CD8-positive, alpha-beta T cell (primary cell): ENCODE measurements at regions of chr6 and their contacts with region 1.

Region 1: DNA sequence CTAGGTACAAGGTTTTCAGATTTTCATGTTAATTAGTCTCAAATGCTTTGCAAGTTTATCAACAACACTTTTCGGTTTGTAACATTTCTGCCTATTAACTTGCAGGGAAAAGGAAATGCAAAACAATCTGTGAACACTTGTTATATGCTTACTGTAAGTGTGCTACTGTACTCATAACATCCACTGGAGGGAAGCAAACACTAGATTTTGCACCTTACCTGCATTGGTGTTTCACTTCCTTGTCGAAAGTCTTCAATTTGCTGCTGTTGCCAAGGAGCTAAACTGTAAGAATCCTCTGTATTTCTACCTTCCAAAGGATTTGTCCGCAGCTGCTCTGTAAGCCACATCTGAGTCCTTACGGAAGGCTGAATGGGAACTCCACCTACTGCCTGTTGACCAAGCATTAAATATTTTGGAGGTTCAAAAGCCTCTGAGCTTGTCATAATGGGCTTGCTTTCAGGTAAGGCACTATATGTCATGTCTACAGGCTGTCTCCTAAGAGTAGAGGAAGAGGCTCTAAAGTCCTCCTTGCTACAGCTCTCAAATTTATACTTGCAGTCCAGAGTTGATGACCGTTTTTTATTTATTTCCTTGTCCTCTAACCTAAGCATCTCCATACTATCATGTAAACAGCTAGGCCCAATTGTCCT is 17.3 kb downstream of the PLN start:
- DNase-seq: peak in 3 of 9 experiments; percentile 13 to 78 (median 66)
- ATAC-seq: peak; percentile 97
- H3K4me3 ChIP-seq: no peak overlapping the region
- H3K4me3 Mint-ChIP-seq: no peak overlapping the region
- H3K27ac ChIP-seq: no peak overlapping the region
- H3K27ac Mint-ChIP-seq: peak overlapping the region; percentile 85
- H3K4me1 ChIP-seq: peaks cover 3% of the 10 kb centered on the region
- H3K4me1 Mint-ChIP-seq: peaks cover 48% of the 10 kb centered on the region
- H3K27me3 ChIP-seq: no peaks in the 10 kb centered on the region
- H3K27me3 Mint-ChIP-seq: no peaks in the 10 kb centered on the region
- CTCF ChIP-seq: peak; percentile 72

Region 2: DNA sequence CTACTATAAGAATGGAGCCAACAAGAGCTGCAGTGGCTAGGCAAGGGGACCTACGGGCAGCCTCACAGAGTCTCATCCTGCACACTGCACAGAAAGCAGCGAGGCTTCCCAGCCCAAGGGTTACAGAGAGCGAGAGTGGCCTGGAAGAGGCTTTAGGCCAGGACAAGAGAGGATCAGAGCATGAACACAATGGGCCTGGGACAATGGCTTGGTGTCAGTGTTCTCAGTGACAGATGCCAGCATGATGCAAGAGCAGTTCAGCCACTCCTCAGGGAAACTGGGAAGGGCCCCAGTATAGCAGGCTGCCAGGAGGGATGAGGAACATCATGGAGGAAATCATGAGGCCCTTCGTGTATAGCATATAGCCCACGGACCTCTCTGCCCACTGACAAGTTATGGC is 782.2 kb before region 1 on chr6:
- CTCF ChIA-PET with region 1: no interaction called
- POLR2A ChIA-PET with region 1: no interaction called
- intact Hi-C with region 1: no loop called
- DNase-seq: no peak
- ATAC-seq: no peak
- H3K4me3 ChIP-seq: no peak overlapping the region
- H3K4me3 Mint-ChIP-seq: no peak overlapping the region
- H3K27ac ChIP-seq: no peak overlapping the region
- H3K27ac Mint-ChIP-seq: no peak overlapping the region
- H3K4me1 ChIP-seq: no peaks in the 10 kb centered on the region
- H3K4me1 Mint-ChIP-seq: no peaks in the 10 kb centered on the region
- H3K27me3 ChIP-seq: no peaks in the 10 kb centered on the region
- H3K27me3 Mint-ChIP-seq: peaks cover 10% of the 10 kb centered on the region
- CTCF ChIP-seq: no peak

Region 3: DNA sequence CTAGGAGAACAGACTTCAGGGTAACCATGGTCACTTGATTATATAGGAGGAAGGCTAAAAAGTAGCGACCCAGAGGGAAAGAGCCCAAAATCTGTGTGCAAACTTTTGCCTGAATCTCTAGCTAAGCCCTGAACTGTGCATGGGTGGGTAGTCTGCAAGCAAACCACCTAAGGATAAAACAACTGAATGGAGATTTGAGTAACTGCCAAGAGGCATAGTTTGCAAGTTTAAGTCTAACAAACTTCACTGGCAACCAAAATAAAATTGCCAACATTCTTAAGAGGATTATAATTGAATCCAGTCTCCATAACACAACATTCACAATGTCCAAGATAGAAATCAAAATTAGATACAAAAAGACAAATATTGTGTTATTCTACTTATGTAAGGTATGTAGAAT is 209.4 kb before region 1 on chr6:
- CTCF ChIA-PET with region 1: no interaction called
- POLR2A ChIA-PET with region 1: no interaction called
- intact Hi-C with region 1: no loop called
- DNase-seq: no peak
- ATAC-seq: no peak
- H3K4me3 ChIP-seq: no peak overlapping the region
- H3K4me3 Mint-ChIP-seq: no peak overlapping the region
- H3K27ac ChIP-seq: no peak overlapping the region
- H3K27ac Mint-ChIP-seq: no peak overlapping the region
- H3K4me1 ChIP-seq: no peaks in the 10 kb centered on the region
- H3K4me1 Mint-ChIP-seq: no peaks in the 10 kb centered on the region
- H3K27me3 ChIP-seq: no peaks in the 10 kb centered on the region
- H3K27me3 Mint-ChIP-seq: no peaks in the 10 kb centered on the region
- CTCF ChIP-seq: no peak

Region 4: DNA sequence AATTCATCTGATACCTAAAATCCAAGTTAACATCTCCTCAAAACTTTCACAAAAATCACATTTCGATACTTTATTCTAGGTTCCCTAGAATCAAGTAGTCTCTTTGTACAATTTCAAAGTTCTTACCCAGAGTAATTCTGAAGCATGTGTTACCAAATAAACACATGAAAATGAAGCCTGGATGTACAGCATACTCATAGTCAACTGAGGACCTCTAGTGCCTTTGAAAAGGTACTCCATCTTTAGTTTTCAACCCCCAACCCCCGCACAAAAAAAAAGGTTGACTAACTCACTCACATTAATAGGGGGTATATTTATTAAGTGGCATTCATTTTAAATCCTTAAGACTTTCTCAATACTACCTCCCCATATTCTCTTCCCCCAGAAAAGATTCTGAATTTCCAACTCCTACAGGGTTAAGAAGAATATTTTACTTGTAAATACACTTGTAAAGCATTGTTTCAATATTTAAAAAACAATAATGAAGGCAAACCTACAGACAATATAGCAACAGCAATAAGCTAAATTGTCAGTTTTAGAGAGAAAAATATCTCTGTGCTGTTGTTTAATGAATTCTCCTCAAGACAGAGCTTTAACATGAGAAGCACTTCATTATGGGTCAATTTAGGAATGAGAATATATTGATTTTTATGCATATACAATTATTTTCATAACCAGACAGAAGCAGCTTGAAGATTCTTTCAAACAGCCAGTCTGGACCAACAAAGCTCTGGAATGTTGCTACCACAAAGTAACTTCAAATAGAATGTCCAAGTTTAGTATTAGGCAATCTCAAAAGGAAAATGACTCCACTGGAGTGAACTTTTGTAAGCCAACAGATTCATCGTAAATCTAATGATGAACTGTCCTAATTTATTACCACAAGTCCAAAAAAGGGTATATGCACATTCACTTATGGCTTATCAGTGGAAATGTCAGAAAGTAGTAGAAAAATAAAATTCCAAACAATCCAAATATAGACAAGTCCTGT is 14.1 kb before region 1 on chr6:
- CTCF ChIA-PET with region 1: interaction called, 10 read pairs
- POLR2A ChIA-PET with region 1: no interaction called
- intact Hi-C with region 1: no loop called
- DNase-seq: peak in 2 of 9 experiments; percentile 54 to 70
- ATAC-seq: peak; percentile 97
- H3K4me3 ChIP-seq: no peak overlapping the region
- H3K4me3 Mint-ChIP-seq: peak overlapping the region; percentile 8
- H3K27ac ChIP-seq: no peak overlapping the region
- H3K27ac Mint-ChIP-seq: peak overlapping the region; percentile 73
- H3K4me1 ChIP-seq: peaks cover 7% of the 10 kb centered on the region
- H3K4me1 Mint-ChIP-seq: peaks cover 51% of the 10 kb centered on the region
- H3K27me3 ChIP-seq: no peaks in the 10 kb centered on the region
- H3K27me3 Mint-ChIP-seq: no peaks in the 10 kb centered on the region
- CTCF ChIP-seq: peak; percentile 79

Region 5: DNA sequence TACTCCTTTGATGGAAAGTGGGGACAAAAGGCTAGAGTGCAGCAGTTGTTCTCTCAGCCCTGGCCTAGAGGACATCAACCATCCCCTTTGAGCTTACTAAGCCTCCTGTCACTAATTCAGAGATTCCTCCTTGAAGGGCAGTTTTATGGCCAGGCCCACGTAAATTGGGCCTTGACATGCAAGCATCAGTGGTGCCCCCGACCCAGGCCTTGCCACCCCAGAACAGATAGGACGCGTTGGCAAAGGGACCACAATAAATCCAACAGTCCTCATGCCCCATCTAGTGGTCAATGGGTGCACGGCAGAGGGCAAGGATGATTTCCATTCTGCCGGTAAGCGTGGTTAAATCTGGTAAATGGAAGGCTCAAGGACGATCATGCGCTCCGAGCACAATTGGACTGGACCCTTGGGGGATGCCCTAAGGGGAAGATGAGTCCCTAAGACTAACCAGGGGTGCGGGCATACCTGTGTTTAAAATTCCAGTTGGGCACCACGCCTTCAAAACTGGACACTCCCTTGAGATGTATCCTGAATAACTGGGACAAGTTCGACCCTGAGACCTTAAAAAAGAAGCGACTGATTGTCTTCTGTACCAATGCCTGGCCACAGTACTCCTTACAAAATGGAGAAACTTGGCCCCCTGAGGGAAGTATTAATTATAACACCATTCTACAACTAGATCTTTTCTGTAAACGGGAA is 53.4 kb after region 1 on chr6:
- CTCF ChIA-PET with region 1: interaction called, 14 read pairs
- POLR2A ChIA-PET with region 1: no interaction called
- intact Hi-C with region 1: loop called (anchors 1 kb)
- DNase-seq: peak; percentile 38 to 81 (median 66)
- ATAC-seq: peak; percentile 96
- H3K4me3 ChIP-seq: no peak overlapping the region
- H3K4me3 Mint-ChIP-seq: no peak overlapping the region
- H3K27ac ChIP-seq: no peak overlapping the region
- H3K27ac Mint-ChIP-seq: peak overlapping the region; percentile 83
- H3K4me1 ChIP-seq: peaks cover 7% of the 10 kb centered on the region
- H3K4me1 Mint-ChIP-seq: peaks cover 64% of the 10 kb centered on the region
- H3K27me3 ChIP-seq: no peaks in the 10 kb centered on the region
- H3K27me3 Mint-ChIP-seq: no peaks in the 10 kb centered on the region
- CTCF ChIP-seq: peak; percentile 79

Region 6: DNA sequence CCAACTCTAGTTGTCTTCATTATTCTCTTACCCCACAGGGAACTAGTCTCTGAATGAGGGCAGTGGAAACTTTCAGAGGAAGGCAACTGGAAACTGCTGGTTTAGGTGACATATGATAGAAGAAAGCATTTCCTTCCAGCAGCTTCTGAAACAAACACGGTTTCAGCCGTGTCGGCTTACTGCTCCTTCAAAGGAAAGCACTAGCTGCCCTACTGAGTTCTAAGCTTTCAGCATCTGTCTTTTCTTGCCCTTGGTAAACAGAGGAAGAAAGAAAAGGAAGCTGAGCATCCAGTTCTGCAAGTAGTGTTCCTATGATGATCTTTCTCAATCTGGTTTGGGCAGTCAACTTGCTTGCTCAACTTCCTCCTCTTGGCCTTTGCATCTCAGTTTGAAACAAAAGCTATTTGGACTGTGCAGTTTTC is 203.5 kb after region 1 on chr6:
- CTCF ChIA-PET with region 1: interaction called, 15 read pairs
- POLR2A ChIA-PET with region 1: interaction called, 4 read pairs
- intact Hi-C with region 1: no loop called
- DNase-seq: peak in 6 of 9 experiments; percentile 2 to 57 (median 15)
- ATAC-seq: peak; percentile 44
- H3K4me3 ChIP-seq: peak overlapping the region in 1 of 2 experiments; percentile 10
- H3K4me3 Mint-ChIP-seq: peak overlapping the region; percentile 35
- H3K27ac ChIP-seq: peak overlapping the region in 1 of 2 experiments; percentile 66
- H3K27ac Mint-ChIP-seq: peak overlapping the region; percentile 91
- H3K4me1 ChIP-seq: peaks cover 14% of the 10 kb centered on the region
- H3K4me1 Mint-ChIP-seq: peaks cover 26% of the 10 kb centered on the region
- H3K27me3 ChIP-seq: no peaks in the 10 kb centered on the region
- H3K27me3 Mint-ChIP-seq: no peaks in the 10 kb centered on the region
- CTCF ChIP-seq: no peak

Region 7: DNA sequence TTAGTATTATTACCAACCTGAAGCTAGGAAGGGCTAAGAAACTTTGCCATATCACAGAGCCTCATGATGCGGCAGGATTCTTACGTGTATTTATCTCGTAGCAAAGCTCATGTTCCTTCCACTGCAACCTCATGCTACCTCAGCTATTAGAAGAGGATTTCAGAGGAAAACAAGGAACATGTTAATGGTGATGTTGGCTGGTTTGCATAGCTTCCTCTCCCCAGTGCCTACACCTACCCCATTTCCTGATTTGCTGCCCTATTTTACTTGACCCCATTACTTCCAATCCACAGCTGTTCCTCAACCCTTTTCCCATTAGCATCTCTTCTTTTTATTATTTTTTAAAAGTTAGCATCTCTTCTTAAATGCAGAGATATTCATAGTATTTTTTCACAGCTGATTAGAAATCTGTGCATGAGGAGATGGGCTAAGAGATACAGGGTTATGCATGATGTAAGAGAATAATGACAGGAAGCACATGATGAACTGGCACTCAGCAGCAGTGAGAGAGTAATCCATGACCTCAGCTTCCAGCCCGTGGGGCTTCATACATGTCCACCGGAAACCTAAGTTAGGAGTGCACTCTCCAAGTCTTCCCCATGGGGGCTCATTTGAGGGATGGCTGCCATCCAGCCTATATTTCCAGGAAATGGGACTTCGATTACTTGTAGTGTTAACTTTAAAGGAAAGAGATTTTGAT is 222.4 kb after region 1 on chr6:
- CTCF ChIA-PET with region 1: interaction called, 14 read pairs
- POLR2A ChIA-PET with region 1: no interaction called
- intact Hi-C with region 1: no loop called
- DNase-seq: peak in 2 of 9 experiments; percentile 24 to 37
- ATAC-seq: peak; percentile 85
- H3K4me3 ChIP-seq: no peak overlapping the region
- H3K4me3 Mint-ChIP-seq: no peak overlapping the region
- H3K27ac ChIP-seq: peak overlapping the region in 1 of 2 experiments; percentile 37
- H3K27ac Mint-ChIP-seq: peak overlapping the region; percentile 69
- H3K4me1 ChIP-seq: peaks cover 13% of the 10 kb centered on the region
- H3K4me1 Mint-ChIP-seq: peaks cover 30% of the 10 kb centered on the region
- H3K27me3 ChIP-seq: no peaks in the 10 kb centered on the region
- H3K27me3 Mint-ChIP-seq: no peaks in the 10 kb centered on the region
- CTCF ChIP-seq: no peak

Region 8: GRCh38 chr6:118810420-118811027 is 245.1 kb after region 1 on chr6:
- CTCF ChIA-PET with region 1: interaction called, 11 read pairs
- POLR2A ChIA-PET with region 1: no interaction called
- intact Hi-C with region 1: no loop called
- DNase-seq: peak; percentile 28 to 90 (median 74)
- ATAC-seq: peak; percentile 95
- H3K4me3 ChIP-seq: peak overlapping the region in 1 of 2 experiments; percentile 15
- H3K4me3 Mint-ChIP-seq: peak overlapping the region; percentile 55
- H3K27ac ChIP-seq: peak overlapping the region; percentile 42 to 80
- H3K27ac Mint-ChIP-seq: peak overlapping the region; percentile 87
- H3K4me1 ChIP-seq: peaks cover 28% of the 10 kb centered on the region
- H3K4me1 Mint-ChIP-seq: peaks cover 55% of the 10 kb centered on the region
- H3K27me3 ChIP-seq: no peaks in the 10 kb centered on the region
- H3K27me3 Mint-ChIP-seq: no peaks in the 10 kb centered on the region
- CTCF ChIP-seq: no peak

Region 9: DNA sequence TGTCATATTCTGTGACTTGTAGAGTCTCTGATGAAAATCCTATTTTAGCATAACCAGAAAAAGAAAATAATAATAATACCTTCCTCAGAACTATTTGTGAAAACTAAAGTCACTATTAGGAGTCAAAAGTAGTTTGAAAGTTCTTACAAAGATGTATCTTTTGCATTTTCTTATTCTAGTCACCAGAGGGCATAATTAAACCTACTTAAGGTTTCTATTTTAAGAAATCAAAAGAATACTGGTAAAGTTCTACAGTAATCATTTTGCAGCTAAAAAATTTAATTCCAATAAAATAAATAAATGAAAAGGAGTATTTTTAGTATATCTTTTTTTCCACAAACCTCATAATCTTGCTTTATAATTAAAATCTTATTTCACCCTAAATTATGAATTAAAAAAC is 397.6 kb after region 1 on chr6:
- CTCF ChIA-PET with region 1: interaction called, 10 read pairs
- POLR2A ChIA-PET with region 1: no interaction called
- intact Hi-C with region 1: loop called in 1 of 2 experiments (anchors 10 kb)
- DNase-seq: peak in 1 of 9 experiments; percentile 22
- ATAC-seq: no peak
- H3K4me3 ChIP-seq: no peak overlapping the region
- H3K4me3 Mint-ChIP-seq: no peak overlapping the region
- H3K27ac ChIP-seq: no peak overlapping the region
- H3K27ac Mint-ChIP-seq: no peak overlapping the region
- H3K4me1 ChIP-seq: no peaks in the 10 kb centered on the region
- H3K4me1 Mint-ChIP-seq: peaks cover 6% of the 10 kb centered on the region
- H3K27me3 ChIP-seq: no peaks in the 10 kb centered on the region
- H3K27me3 Mint-ChIP-seq: no peaks in the 10 kb centered on the region
- CTCF ChIP-seq: peak; percentile 49